ENCODE measurements at regions of chr14 and their contacts with region 1.

Region 1: DNA sequence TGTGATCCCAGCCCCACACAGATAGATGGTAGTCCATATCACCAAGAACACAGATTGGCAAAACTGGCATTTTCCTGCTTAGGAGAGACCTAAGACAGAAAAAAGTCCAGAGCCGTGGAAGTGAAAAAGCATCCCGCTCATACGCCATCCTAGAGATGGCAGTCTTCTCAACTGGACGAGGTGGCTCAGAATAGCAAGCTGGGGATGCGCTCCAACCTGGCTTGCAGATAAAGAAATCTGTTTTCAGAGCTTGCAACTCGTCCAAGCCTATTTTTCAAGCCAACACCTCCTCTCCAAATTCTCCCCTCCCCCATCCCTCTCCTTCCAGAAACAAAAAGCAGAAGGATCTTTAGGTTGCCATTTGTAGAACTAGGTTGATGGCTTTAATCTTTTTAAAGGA is 74.3 kb upstream of the OTX2 start:
- DNase-seq: no peak
- ATAC-seq: peak; percentile 29
- H3K4me3 Mint-ChIP-seq: no peak overlapping the region
- H3K27ac Mint-ChIP-seq: no peak overlapping the region
- H3K4me1 Mint-ChIP-seq: peaks cover 50% of the 10 kb centered on the region
- H3K27me3 Mint-ChIP-seq: peaks cover 92% of the 10 kb centered on the region
- CTCF ChIP-seq: no peak

Region 2: DNA sequence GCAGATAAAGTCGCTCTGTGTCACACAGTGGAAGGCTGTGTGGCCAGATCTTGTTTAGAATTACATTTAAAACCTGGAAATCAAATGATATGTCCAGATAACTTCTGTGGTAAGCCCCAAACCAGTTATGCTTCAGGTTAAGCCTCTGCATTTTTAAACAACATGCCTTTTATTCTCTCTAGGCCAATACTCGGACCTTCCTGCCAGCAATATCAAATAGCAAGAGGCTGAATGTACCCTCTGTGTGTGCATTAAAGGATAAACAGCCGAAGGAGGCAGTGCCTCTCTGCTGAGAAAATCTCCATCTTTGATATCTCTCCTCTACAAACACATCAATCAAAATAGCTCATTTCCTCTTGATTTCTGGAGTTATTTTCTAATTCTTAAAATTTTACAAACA is 372.1 kb before region 1 on chr14:
- CTCF ChIA-PET with region 1: no interaction called
- POLR2A ChIA-PET with region 1: no interaction called
- DNase-seq: no peak
- ATAC-seq: no peak
- H3K4me3 Mint-ChIP-seq: no peak overlapping the region
- H3K27ac Mint-ChIP-seq: no peak overlapping the region
- H3K4me1 Mint-ChIP-seq: peaks cover 5% of the 10 kb centered on the region
- H3K27me3 Mint-ChIP-seq: peaks cover 5% of the 10 kb centered on the region; the same call in 1 of the 2 replicates
- CTCF ChIP-seq: no peak

Region 3: GRCh38 chr14:56686416-56686815 is 198.2 kb before region 1 on chr14:
- CTCF ChIA-PET with region 1: no interaction called
- POLR2A ChIA-PET with region 1: no interaction called
- DNase-seq: peak; percentile 61
- ATAC-seq: peak; percentile 93
- H3K4me3 Mint-ChIP-seq: no peak overlapping the region
- H3K27ac Mint-ChIP-seq: no peak overlapping the region
- H3K4me1 Mint-ChIP-seq: peaks cover 24% of the 10 kb centered on the region
- H3K27me3 Mint-ChIP-seq: peaks cover 2% of the 10 kb centered on the region; the same call in 1 of the 2 replicates
- CTCF ChIP-seq: no peak

Region 4: DNA sequence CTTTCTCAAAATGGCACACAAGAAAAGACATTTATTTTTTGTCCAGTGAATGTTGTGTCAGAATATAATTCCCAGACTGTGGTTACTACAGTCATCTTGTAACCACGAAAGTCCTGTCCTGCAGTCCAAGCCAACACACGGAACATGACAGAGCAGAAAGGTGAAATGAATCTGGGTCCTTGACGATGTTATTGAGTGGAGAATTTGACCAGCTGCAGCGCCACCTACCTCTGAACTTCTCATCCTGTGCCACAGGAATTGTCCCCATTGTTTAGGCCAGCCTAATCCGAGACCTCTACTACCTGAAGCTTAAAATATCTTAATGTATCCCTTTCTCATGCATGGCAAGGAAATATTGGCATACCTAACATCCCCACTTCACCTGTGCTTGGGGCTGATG is 10.2 kb before region 1 on chr14:
- CTCF ChIA-PET with region 1: interaction called, 21 read pairs
- POLR2A ChIA-PET with region 1: no interaction called
- DNase-seq: peak; percentile 68
- ATAC-seq: peak; percentile 97
- H3K4me3 Mint-ChIP-seq: no peak overlapping the region
- H3K27ac Mint-ChIP-seq: no peak overlapping the region
- H3K4me1 Mint-ChIP-seq: peaks cover 18% of the 10 kb centered on the region
- H3K27me3 Mint-ChIP-seq: peaks cover 95% of the 10 kb centered on the region
- CTCF ChIP-seq: peak; percentile 55

Region 5: GRCh38 chr14:56953884-56954283 is 69.3 kb after region 1 on chr14:
- CTCF ChIA-PET with region 1: no interaction called
- POLR2A ChIA-PET with region 1: no interaction called
- DNase-seq: no peak
- ATAC-seq: no peak
- H3K4me3 Mint-ChIP-seq: no peak overlapping the region
- H3K27ac Mint-ChIP-seq: no peak overlapping the region
- H3K4me1 Mint-ChIP-seq: peaks cover 28% of the 10 kb centered on the region
- H3K27me3 Mint-ChIP-seq: no peaks in the 10 kb centered on the region; the same call in 1 of the 2 replicates
- CTCF ChIP-seq: no peak

Region 6: GRCh38 chr14:56996743-56997399 is 112.3 kb after region 1 on chr14:
- CTCF ChIA-PET with region 1: no interaction called
- POLR2A ChIA-PET with region 1: no interaction called
- DNase-seq: no peak
- ATAC-seq: no peak
- H3K4me3 Mint-ChIP-seq: no peak overlapping the region
- H3K27ac Mint-ChIP-seq: no peak overlapping the region
- H3K4me1 Mint-ChIP-seq: peaks cover 30% of the 10 kb centered on the region
- H3K27me3 Mint-ChIP-seq: peaks cover 2% of the 10 kb centered on the region; the same call in 1 of the 2 replicates
- CTCF ChIP-seq: no peak

Measured in WTC11 (cell line).